Right ventricle myocardium superior (tissue), 1 donor: ENCODE measurements at regions of chr5 and their contacts with region 1.

Region 1: GRCh38 chr5:81851481-81852178 is 100.7 kb upstream of the SSBP2 start:
- DNase-seq: peak; percentile 99
- ATAC-seq: peak; percentile 94

Region 2: GRCh38 chr5:81751009-81751835 is 100.4 kb before region 1 on chr5 and contains the start of gene SSBP2:
- intact Hi-C with region 1: loop called (anchors 1 kb)
- DNase-seq: peak; percentile 100
- ATAC-seq: peak; percentile 95
- total RNA-seq, gene SSBP2: 46.9 TPM

Region 3: DNA sequence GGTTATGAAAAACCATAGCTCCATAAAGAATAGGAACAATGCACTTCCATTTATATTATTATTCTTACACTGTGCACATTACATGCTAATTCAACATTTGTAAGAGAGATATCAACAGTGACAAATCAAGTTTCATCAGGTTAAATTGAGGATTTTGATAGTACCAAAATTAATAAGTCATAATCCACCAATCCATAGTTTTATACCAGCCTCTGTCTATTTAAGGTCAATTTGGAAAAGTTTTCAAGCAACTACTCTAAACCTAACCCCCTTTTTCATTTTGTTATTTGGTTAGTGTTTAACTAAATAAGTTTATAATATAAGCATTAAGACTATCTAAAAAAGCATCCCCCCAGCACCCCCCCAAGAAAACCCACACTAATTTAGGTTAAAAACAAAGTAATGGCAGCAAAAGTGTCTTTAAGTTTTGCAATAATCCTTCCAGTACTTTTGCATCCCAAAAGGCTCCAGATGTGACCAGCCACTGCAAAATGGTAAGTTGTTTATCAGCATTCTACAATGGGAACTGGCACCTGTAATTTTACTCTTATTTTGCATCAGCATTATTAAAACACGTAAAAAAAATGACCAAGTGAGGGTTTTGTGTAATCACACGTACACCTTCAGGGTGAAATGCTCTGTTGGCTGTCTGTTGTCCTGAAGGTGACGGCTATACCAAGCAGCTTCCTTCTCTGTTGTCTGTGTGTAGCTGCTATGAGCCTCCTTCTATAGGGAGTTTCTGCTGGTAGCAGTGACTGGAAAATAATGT is 64.0 kb before region 1 on chr5:
- intact Hi-C with region 1: loop called (anchors 5 kb)
- DNase-seq: no peak
- ATAC-seq: peak; percentile 76

Region 4: GRCh38 chr5:81819556-81820317 is 31.9 kb before region 1 on chr5:
- intact Hi-C with region 1: no loop called
- DNase-seq: no peak
- ATAC-seq: no peak